SK-N-SH (cell line): ENCODE measurements at regions of chr16 and their contacts with region 1.

Region 1: DNA sequence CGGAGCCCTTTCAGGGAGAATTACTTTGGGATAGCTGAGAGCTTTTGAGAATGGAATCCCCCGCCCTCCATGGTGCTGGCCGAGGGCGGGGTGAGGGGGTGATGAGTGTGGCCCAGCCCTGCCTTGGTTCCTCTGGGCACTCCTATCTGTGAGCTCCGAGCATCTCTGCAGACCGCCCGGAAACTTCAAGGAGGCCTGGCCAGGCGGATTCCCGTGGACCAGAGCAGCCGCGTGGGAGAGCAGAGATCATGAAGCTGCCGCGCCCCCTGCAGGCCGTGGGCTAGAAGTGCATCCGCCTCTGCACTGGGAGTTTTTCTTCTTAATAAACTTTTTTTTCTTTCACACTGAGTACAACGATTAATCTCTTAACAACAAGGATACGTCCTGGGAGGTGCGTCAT is 392.9 kb upstream of the EEF2KMT start:
- DNase-seq: peak; percentile 70
- H3K4me3 ChIP-seq: peak overlapping the region in 1 of 2 experiments; percentile 41; a peak in 1 of 4 replicates
- H3K27ac ChIP-seq: no peak overlapping the region
- H3K4me1 ChIP-seq: peaks cover 0 to 9% of the 10 kb centered on the region in 2 experiments; a peak in 1 of 4 replicates
- H3K27me3 ChIP-seq: no peaks in the 10 kb centered on the region
- CTCF ChIP-seq: peak; percentile 41
- EP300 ChIP-seq: no peak
- RAD21 ChIP-seq: peak; percentile 91

Region 2: DNA sequence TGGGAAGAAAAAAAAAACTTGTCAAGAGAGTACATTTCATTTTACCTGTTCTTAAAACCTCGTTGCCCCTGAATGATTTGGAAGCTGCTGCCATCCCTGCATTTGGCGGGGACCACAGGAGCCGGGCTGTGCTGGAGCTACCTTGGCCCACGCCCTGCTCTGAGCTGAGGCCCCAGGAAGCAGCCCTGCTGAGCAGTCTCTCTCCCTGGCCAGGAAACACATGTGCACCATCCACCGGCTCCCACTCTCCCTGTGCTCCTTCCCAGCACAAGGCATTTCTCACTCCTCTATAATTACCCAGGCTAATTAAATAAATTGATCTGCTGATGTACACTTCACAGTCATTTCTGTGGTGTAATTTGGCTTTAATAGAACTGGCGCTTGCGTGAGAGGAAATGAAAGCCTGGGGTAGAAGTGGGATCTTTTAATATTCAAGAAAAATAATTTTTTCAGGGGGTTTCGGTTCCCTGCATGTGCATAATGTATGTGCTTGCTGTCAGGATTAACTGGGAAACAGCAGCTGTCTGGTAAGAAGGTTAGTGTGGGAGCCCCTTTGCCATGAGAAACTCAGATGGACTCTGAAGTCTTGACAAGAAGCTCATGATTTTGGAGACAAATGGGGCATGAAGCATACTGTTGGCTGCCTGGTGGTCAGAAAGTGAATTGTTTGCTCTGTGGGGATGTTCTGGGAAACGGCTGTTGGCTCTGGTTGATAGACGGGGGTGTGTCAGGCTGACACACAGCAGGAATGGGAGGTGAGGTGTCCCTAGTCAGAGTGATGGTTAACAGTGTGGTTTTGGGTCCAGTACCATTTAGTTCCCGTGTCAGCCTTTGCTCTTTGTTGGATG is 140.6 kb before region 1 on chr16:
- CTCF ChIA-PET with region 1: no interaction called
- POLR2A ChIA-PET with region 1: no interaction called
- DNase-seq: peak; percentile 21
- H3K4me3 ChIP-seq: no peak overlapping the region
- H3K27ac ChIP-seq: no peak overlapping the region
- H3K4me1 ChIP-seq: peaks cover 0 to 9% of the 10 kb centered on the region in 2 experiments; a peak in 1 of 4 replicates
- H3K27me3 ChIP-seq: no peaks in the 10 kb centered on the region
- CTCF ChIP-seq: no peak
- EP300 ChIP-seq: no peak
- RAD21 ChIP-seq: no peak

Region 3: GRCh38 chr16:5412728-5413127 is 77.8 kb before region 1 on chr16:
- CTCF ChIA-PET with region 1: interaction called, 86 read pairs
- POLR2A ChIA-PET with region 1: interaction called, 4 read pairs
- DNase-seq: peak; percentile 50
- H3K4me3 ChIP-seq: no peak overlapping the region
- H3K27ac ChIP-seq: no peak overlapping the region
- H3K4me1 ChIP-seq: peaks cover 0 to 5% of the 10 kb centered on the region in 2 experiments; a peak in 1 of 4 replicates
- H3K27me3 ChIP-seq: no peaks in the 10 kb centered on the region
- CTCF ChIP-seq: no peak
- EP300 ChIP-seq: no peak
- RAD21 ChIP-seq: peak; percentile 76

Region 4: DNA sequence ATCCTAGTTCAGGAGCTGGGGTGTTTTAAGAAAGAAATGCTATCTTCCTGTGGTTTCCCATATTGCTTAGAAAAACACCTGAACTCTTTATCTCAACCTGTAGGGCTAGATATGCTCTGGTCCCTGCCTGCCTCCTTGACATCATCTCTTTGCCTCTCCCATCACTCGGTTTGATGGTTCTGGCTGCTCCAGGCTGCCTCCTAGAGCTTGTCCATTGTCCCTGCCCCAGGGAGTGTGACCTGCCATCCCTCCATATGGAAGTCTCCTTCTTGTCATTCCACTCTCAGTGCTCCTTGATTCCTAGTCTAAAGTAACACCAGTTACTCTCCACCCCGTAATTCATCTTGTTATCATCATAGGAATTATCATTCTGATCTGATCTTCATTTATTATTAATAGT is 23.9 kb before region 1 on chr16:
- CTCF ChIA-PET with region 1: interaction called, 12 read pairs
- POLR2A ChIA-PET with region 1: no interaction called
- DNase-seq: no peak
- H3K4me3 ChIP-seq: no peak overlapping the region
- H3K27ac ChIP-seq: no peak overlapping the region; a peak in 1 of 4 replicates
- H3K4me1 ChIP-seq: peaks cover 0 to 25% of the 10 kb centered on the region in 2 experiments; a peak in 2 of 4 replicates
- H3K27me3 ChIP-seq: no peaks in the 10 kb centered on the region
- CTCF ChIP-seq: no peak
- EP300 ChIP-seq: no peak
- RAD21 ChIP-seq: no peak

Region 5: DNA sequence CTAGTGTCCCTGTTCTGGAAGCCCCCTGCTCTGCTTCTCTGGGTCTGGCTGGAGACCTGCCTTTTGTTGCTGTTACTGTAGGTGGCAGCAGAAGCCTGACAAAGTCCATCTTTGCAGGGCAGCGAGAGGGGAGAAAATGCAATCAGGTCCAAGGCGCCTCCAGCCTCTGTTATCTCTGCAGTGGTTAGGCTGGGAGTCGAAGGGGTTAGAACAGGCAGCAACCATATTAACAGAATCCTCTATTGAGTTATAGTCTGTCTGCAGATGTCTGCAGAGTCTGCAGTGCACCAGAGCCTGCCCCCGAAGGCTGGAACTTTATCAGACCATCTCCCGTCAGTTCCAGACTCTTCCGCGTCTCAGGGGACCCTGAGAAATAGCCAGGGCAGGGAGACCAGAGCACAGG is 12.0 kb after region 1 on chr16:
- CTCF ChIA-PET with region 1: interaction called, 19 read pairs
- POLR2A ChIA-PET with region 1: no interaction called
- DNase-seq: peak; percentile 76
- H3K4me3 ChIP-seq: no peak overlapping the region
- H3K27ac ChIP-seq: peak overlapping the region in 1 of 2 experiments; percentile 100; a peak in 2 of 4 replicates
- H3K4me1 ChIP-seq: peaks cover 0 to 62% of the 10 kb centered on the region in 2 experiments; a peak in 2 of 4 replicates
- H3K27me3 ChIP-seq: no peaks in the 10 kb centered on the region
- CTCF ChIP-seq: 0 out of 2 replicates have a peak, but pooled peaks have one; percentile 8
- EP300 ChIP-seq: peak in 1 of 2 experiments; percentile 100; a peak in 2 of 4 replicates
- RAD21 ChIP-seq: peak; percentile 95